GM18951 (cell line): ENCODE measurements at regions of chr12 and their contacts with region 1.

Region 1: DNA sequence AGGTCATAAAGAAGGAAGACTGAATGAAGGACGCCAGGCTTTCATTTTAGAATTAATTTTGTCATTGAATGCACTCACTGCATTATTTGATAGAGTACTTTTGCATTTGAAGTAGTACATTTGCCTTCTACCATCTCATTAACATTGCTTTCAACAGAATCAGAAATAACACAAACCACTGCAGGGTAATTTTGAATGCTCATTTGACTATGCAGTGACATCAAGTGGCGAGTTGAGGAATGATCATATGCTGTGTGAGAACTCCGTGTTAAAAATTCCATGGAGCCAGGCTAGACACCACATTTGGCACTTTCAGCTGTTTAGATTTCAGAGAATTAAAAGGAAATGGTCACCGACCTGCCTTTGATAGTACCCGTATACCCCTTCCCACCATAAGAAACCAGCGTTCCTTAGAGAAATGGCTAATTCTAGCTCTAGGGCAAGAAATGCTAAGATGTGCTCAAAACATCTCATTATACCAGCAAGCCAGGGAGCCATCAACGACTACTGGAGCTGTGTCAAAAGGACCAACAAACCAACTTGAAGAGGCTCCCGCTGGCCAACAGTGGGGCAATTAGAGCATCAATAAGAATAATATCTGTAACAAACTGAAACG is 16.5 kb downstream of the HEBP1 start:
- POLR2A ChIP-seq: no peak

Region 2: DNA sequence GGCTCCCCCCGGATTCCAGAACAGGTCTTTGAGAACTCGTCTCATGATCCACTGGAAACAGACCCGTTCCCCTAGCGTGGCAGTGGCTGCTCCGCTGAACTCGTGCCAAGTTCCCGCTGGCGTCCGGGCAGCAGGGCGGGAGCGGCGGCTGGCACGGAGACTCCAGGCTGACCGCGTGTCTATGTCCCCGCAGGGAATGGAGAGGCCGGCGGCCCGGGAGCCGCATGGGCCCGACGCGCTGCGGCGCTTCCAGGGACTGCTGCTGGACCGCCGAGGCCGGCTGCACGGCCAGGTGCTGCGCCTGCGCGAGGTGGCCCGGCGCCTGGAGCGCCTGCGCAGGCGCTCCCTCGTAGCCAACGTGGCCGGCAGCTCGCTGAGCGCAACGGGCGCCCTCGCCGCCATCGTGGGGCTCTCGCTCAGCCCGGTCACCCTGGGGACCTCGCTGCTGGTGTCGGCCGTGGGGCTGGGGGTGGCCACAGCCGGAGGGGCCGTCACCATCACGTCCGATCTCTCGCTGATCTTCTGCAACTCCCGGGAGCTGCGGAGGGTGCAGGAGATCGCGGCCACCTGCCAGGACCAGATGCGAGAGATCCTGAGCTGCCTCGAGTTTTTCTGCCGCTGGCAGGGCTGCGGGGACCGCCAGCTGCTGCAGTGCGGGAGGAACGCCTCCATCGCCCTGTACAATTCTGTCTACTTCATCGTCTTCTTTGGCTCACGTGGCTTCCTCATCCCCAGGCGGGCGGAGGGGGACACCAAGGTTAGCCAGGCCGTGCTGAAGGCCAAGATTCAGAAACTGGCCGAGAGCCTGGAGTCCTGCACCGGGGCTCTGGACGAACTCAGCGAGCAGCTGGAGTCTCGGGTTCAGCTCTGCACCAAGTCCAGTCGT is 196.6 kb before region 1 on chr12:
- in situ Hi-C with region 1: loop called (anchors 10 kb)
- POLR2A ChIP-seq: peak; percentile 94

Region 3: DNA sequence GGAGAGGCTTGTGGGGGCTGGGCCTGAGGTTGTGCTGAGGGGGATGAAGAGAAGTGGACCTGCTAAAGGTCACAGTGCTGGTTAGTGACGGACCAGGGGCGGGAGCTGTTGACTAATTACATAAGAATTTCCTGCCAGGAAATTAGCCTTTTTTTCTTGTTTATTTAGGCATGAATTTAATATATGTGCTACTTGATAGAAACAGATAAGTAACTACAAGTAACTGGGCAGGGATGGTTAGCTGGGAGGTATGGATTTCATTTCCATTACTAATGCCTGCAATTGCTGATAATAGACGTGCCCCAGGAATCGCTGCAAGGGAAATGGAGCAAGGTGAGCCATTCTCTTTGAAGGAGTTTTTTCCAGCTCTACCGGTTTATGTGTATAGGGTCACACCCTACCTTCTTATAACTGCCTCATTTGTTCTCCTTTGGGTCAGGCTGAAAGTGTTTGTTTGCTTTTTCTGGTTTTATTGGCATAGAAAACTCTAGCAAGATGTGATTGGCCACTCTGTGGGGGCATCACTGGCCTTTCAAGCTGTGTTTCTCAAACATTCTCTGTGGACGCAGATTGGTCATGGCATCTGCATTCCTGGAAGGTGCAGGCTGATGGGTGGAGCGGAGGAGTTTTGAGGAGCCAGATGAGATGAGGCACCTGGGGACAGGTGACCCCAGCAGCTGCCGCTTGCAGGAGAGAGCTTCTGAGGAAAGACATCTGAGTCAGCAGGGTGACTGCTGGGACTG is 111.2 kb before region 1 on chr12:
- in situ Hi-C with region 1: no loop called
- POLR2A ChIP-seq: no peak

Region 4: GRCh38 chr12:14605401-14605989 is 1622.0 kb after region 1 on chr12:
- in situ Hi-C with region 1: no loop called
- POLR2A ChIP-seq: no peak